ENCODE measurements at regions of chr5 and their contacts with region 1.

Region 1: GRCh38 chr5:42994246-42995151 is 45.6 kb downstream of the ANXA2R start:
- DNase-seq: peak; percentile 80 to 90
- ATAC-seq: peak; percentile 82

Region 2: DNA sequence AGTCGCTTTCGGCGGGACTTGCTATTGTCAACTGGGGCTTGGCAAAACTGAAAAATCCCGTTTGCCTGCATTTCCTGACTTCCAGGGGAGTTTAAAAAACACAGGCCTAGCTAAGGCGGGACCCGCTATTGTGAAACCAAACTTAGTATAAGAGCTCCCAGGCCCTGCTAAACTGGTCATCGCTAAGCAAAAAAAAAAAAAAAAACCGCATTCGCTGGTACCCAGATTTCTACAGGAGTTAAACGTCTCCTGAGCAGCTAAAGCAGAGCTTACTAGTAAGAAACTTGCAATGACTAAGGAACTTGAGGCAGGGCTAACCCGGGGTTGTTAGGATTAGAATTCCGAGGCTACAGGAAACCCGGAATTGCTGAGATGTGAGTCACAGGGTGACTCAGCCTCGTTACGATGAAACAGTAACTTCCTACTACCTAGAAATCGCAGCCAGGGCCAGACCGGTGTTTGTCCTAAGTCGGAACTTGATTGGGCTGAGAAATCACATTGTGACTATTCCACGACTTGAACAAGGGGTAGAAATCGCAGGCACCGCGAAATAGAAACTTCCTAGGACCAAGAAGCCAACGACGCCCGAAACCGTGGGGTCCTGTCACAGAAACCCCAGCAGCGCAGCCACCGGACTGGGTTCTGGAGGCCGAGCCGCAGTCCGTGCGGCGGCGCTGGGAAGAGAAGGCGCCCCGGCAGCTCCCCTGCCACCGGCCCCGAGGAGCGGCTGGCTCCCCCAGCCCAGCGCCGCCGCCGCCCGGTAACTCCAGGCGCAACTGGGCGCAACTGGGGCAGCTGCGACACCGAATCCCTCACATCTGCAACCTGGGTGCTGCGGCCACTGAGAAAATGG is 43.8 kb before region 1 on chr5:
- intact Hi-C with region 1: loop called (anchors 5 to 10 kb)
- DNase-seq: peak; percentile 68 to 82
- ATAC-seq: peak; percentile 92

Region 3: GRCh38 chr5:43040287-43041098 is 46.0 kb after region 1 on chr5 and contains the start of gene ANXA2R:
- intact Hi-C with region 1: loop called in 1 of 2 experiments (anchors 10 kb)
- DNase-seq: peak; percentile 90 to 92
- ATAC-seq: peak; percentile 70
- total RNA-seq, gene ANXA2R: 1.0 to 1.3 TPM

Measured in left colon (tissue), 2 donors.